ENCODE measurements at regions of chr10 and their contacts with region 1.

Region 1: DNA sequence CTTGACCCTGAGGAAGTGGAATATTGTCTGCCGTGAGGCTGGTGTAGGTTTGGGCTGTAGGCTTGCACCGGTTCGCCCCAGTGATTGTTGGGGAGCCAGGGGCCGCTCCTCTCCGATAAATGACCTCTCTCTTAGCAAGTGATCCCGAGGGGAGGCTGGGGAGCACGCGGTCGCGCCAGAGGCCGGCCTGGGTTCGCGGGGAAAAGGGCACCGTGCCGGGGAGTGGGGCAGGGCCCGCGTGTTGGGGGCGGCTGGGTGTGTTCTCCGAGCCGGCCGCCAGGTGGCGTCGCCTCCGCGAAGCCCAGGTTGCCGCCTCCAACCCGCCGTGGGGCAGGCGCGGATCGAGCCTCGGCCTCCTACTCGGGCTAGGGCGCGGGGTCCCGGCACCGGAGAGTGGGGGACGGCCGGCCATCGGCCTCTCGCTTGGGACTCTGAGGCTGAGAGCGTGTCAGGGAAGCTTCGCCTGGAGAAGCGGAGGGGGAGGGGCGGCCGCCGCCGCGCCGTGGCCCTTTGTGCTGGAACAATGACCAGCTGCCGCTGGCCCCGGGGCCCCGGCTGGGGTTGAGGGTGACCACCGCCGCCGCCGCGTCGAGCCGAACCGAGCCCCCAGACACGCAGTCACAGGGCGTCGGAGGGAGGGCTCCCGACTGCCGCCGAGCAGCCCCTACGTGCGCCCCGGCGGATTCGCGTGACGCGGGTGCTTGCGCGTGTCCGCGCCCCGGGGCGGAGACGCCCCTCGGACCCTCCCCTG is 442 bp upstream of the LZTS2 start:
- DNase-seq: peak; percentile 93
- H3K4me3 ChIP-seq: peak overlapping the region; percentile 66 to 90
- H3K27ac ChIP-seq: peak overlapping the region; percentile 98 to 99
- H3K4me1 ChIP-seq: peaks cover 20 to 37% of the 10 kb centered on the region in 2 experiments; a peak in 3 of 4 replicates
- H3K27me3 ChIP-seq: no peaks in the 10 kb centered on the region
- CTCF ChIP-seq: peak; percentile 77
- EP300 ChIP-seq: no peak; a peak in 1 of 4 replicates
- RAD21 ChIP-seq: peak; percentile 52

Region 2: DNA sequence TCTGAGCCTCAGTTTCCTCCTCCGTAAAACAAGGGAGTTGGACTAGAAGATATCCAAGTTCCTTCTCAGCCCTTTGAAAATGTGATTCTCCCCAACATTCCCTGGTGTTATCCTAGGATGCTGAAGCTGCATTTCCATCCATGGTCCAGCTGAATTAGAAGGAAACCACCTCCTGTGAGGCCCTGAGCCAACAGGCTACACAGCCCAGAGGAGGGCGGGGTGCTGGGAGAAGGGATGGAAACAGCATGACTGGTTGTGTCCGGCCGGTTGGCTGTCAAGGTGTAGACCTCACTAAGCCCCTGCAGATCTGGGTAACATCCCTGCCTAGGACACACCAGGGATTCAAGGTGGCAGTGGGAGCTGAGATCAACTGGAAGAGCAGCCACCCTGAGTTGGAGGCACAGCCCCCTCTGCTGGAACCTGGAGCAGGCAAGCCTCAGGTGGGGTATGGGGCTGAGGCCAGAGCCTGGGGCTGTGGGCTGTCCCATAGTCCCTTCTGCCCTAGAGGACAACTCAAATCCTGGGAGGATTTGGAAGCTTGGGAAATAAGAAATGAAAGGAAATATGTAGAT is 181.8 kb before region 1 on chr10:
- CTCF ChIA-PET with region 1: no interaction called
- POLR2A ChIA-PET with region 1: no interaction called
- DNase-seq: no peak
- H3K4me3 ChIP-seq: no peak overlapping the region
- H3K27ac ChIP-seq: no peak overlapping the region
- H3K4me1 ChIP-seq: peaks cover 0 to 4% of the 10 kb centered on the region in 2 experiments; a peak in 1 of 4 replicates
- H3K27me3 ChIP-seq: peaks cover 37% of the 10 kb centered on the region
- CTCF ChIP-seq: no peak
- EP300 ChIP-seq: no peak
- RAD21 ChIP-seq: peak; percentile 59

Region 3: DNA sequence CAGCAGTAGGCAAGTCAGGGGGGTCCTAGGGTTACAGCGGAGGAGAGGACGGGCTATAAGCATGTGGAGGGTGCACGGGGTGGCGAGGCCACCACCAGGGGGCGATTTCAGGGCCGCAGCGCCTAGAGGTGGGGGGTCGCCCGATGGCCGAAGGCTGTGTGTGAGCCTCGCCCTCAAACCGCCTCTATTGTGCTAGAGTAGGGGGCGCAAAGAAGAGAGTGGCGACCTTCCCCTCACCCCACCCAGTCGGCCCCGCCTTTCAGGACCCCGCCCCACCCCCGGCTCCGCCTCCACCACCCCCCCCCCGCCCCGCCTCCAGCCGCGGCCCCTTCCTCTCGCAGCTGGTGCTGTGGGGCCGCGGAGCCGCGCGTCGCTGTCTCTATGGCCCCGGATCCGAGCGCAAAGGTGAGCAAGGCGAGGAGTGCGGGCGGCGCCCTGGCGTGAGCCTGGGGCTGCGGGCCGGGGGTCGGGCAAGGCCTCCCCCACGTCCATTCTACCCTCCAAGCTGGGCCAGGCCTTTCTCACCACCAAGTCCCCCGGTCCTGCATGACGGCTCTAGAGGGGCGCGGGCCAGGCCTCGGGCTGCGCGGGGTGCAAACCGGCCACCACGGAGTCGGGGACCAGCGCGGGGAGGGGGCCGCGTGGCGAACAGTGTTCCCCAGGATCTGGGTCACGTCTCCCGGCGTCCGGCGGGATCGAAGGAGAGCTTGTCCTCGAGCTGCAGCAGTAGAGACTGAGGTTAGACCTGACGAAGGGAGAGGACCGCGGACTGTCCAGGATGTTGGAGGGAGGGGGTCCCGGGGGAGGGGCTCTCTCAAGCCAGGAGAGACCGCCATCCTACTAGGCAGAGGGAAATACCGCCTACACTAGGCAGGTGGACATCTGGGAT is 29.7 kb before region 1 on chr10 and contains the start of gene SEMA4G:
- CTCF ChIA-PET with region 1: interaction called, 16 read pairs
- POLR2A ChIA-PET with region 1: no interaction called
- DNase-seq: peak; percentile 97
- H3K4me3 ChIP-seq: peak within 1 kb of the TSS; percentile 79 to 82
- H3K27ac ChIP-seq: peak within 1 kb of the TSS in 1 of 2 experiments; percentile 53; a peak in 1 of 4 replicates
- H3K4me1 ChIP-seq: peaks cover 4 to 19% of the 10 kb centered on the region in 2 experiments; a peak in 2 of 4 replicates
- H3K27me3 ChIP-seq: no peaks in the 10 kb centered on the region
- CTCF ChIP-seq: peak; percentile 79
- EP300 ChIP-seq: no peak
- RAD21 ChIP-seq: peak; percentile 24
- polyA plus RNA-seq, gene SEMA4G: 15.0 and 16.2 TPM in 2 replicates

Region 4: GRCh38 chr10:100986952-100987750 is 12.0 kb before region 1 on chr10 and contains the starts of genes MRPL43 and TWNK:
- CTCF ChIA-PET with region 1: interaction called, 81 read pairs
- POLR2A ChIA-PET with region 1: interaction called, 3 read pairs
- DNase-seq: peak; percentile 93
- H3K4me3 ChIP-seq: peak within 1 kb of the TSS; percentile 85 to 98
- H3K27ac ChIP-seq: peak within 1 kb of the TSS; percentile 56 to 95; a peak in 3 of 4 replicates
- H3K4me1 ChIP-seq: peaks cover 21 to 45% of the 10 kb centered on the region in 2 experiments
- H3K27me3 ChIP-seq: no peaks in the 10 kb centered on the region
- CTCF ChIP-seq: no peak
- EP300 ChIP-seq: no peak; a peak in 1 of 4 replicates
- RAD21 ChIP-seq: no peak
- polyA plus RNA-seq, gene MRPL43: 173 and 208 TPM in 2 replicates
- polyA plus RNA-seq, gene TWNK: 16.4 and 20.0 TPM in 2 replicates

Measured in SK-N-SH (cell line).